Activated naive CD4-positive, alpha-beta T cell treated with anti-CD3 and anti-CD28 coated beads, Interleukin-2, amount 10 ng/mL, durations not matched to agents 7 days and 5 days (primary cell): ENCODE measurements at regions of chr4 and their contacts with region 1.

Region 1: DNA sequence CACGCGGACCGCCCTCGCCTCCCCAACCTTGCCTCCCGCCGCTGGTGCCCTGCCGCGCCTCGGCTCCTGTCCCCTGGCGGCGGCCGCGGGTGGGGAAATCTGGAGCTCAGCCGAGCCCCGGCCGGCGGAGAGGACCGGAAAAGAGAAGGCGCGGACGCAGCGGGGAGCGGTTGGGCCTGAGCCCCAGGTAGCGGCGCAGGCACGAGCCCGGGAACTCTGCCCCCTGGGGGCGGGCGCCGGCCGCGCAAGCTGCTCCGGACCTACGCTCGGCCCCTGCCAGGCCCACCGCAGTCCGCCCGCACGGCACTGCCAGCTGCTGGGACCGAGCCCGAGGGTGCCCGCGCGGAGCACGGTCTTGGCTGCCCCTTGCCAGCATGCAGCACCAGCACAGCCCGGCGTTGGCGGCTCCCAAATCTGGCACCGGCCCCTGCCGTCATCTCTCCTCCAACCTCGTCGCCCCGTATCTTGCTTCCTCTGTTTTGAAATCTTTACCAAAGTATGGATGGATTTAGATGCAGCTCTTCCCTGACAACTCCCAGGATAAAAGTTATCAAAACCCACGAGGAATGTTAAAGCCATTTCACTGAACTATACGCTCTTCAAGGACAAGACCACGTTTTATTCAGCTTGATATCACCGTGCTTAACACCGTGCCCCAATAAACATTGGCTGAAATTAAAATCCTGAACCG is at the start of gene PRSS12:
- DNase-seq: peak; percentile 71
- H3K4me3 Mint-ChIP-seq: peak within 1 kb of the TSS; percentile 61
- H3K27ac Mint-ChIP-seq: no peak within 1 kb of the TSS
- H3K4me1 Mint-ChIP-seq: peaks cover 13% of the 10 kb centered on the region
- H3K27me3 Mint-ChIP-seq: peaks cover 74% of the 10 kb centered on the region

Region 2: DNA sequence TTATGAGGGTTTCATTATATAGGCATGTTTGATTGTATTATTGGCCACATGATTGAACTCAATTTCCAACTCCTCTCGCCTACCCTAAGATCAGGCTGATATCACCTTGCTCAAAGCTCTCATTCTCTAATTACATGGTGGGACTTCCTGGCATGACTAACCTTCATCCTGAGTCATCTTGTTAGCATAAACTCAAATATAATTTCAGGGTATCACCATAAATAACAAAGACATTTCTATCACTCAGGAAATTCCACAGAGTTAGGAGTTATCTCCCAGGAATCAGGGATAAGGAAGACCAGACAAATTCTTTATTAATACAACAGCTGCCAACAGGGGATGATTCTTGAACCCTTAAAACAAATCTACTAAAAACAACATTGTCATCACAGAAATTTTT is 228.0 kb before region 1 on chr4:
- CTCF ChIA-PET with region 1: no interaction called
- DNase-seq: no peak
- H3K4me3 Mint-ChIP-seq: no peak overlapping the region
- H3K27ac Mint-ChIP-seq: no peak overlapping the region
- H3K4me1 Mint-ChIP-seq: no peaks in the 10 kb centered on the region
- H3K27me3 Mint-ChIP-seq: no peaks in the 10 kb centered on the region

Region 3: GRCh38 chr4:118363166-118363565 is 10.2 kb after region 1 on chr4:
- CTCF ChIA-PET with region 1: interaction called, 10 read pairs
- DNase-seq: no peak
- H3K4me3 Mint-ChIP-seq: no peak overlapping the region
- H3K27ac Mint-ChIP-seq: no peak overlapping the region
- H3K4me1 Mint-ChIP-seq: no peaks in the 10 kb centered on the region
- H3K27me3 Mint-ChIP-seq: peaks cover 4% of the 10 kb centered on the region